Kidney (tissue), 22 donors: ENCODE measurements at regions of chr9 and their contacts with region 1.

Region 1: DNA sequence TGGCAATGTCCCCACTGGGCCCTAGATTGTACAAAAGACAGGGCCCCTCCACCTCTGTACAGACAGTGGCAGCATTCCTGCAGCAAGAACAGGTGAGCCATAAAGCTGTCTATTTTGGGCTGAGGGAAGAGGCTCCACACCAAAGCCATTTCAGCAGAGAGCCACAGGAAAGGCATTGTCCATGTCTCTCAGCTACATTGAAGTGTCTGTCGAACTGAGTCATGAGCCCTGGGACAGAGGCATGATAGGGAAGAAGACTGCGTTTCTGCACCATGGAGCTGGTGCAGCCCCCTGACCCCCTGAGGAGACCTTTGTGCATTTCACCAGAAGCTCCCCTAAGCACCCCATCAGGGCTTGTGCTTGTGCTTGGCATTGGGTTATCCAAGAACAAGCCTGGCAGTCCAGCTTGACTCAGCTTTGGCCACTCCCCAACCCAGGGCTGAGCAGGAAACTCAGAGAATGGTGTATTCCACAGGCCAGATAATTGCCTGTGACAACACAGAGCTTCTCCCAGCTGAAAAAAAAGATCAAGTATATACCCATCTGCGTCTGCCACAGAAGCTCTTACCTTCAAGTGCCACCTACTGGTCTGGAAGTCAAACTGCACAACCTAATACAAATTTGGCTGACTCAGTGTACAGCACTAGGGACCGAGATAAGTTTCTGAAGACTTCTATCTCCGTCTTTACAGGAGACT is 5.9 kb upstream of the FRMD3 start:
- DNase-seq: peak in 2 of 5 donors; percentile 43 to 60
- H3K4me3 ChIP-seq: no peak overlapping the region
- H3K27ac ChIP-seq: no peak overlapping the region
- H3K4me1 ChIP-seq: peaks cover 0 to under 1% (median 0%) of the 10 kb centered on the region in 3 donors
- H3K27me3 ChIP-seq: no peaks in the 10 kb centered on the region
- CTCF ChIP-seq: peak; percentile 82

Region 2: DNA sequence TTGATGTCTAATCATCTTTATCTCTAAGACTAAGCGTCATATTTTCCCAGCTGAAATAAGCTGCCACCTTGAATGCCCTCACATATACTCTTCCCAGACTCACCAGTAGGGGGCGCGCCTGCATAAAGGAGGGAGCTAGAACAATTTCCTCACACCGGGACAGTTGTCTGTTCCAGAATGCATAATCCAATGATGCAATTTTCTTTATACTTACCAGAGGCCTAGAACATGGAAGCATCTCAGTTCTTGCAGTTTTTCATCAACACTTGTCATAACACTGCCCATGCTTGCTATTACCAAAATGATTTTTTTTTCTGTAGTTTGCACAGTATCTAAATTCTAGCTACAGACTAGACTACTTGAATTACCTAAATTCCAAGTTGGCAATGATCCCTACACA is 209.8 kb before region 1 on chr9:
- intact Hi-C with region 1: loop called (anchors 10 kb)
- DNase-seq: peak; percentile 75 to 89 (median 83)
- H3K4me3 ChIP-seq: no peak overlapping the region
- H3K27ac ChIP-seq: no peak overlapping the region
- H3K4me1 ChIP-seq: peaks cover 0 to 2% (median 0%) of the 10 kb centered on the region in 3 donors
- H3K27me3 ChIP-seq: no peaks in the 10 kb centered on the region
- CTCF ChIP-seq: peak; percentile 96